ENCODE measurements at regions of chr19 and their contacts with region 1.

Region 1: GRCh38 chr19:56333505-56333904 is 18.9 kb upstream of the ZSCAN5A start:
- DNase-seq: peak; percentile 64
- H3K4me3 ChIP-seq: no peak overlapping the region; a peak in 1 of 4 replicates
- H3K27ac ChIP-seq: no peak overlapping the region
- H3K4me1 ChIP-seq: no peaks in the 10 kb centered on the region
- H3K27me3 ChIP-seq: no peaks in the 10 kb centered on the region
- CTCF ChIP-seq: peak; percentile 82
- EP300 ChIP-seq: no peak
- RAD21 ChIP-seq: peak; percentile 89

Region 2: DNA sequence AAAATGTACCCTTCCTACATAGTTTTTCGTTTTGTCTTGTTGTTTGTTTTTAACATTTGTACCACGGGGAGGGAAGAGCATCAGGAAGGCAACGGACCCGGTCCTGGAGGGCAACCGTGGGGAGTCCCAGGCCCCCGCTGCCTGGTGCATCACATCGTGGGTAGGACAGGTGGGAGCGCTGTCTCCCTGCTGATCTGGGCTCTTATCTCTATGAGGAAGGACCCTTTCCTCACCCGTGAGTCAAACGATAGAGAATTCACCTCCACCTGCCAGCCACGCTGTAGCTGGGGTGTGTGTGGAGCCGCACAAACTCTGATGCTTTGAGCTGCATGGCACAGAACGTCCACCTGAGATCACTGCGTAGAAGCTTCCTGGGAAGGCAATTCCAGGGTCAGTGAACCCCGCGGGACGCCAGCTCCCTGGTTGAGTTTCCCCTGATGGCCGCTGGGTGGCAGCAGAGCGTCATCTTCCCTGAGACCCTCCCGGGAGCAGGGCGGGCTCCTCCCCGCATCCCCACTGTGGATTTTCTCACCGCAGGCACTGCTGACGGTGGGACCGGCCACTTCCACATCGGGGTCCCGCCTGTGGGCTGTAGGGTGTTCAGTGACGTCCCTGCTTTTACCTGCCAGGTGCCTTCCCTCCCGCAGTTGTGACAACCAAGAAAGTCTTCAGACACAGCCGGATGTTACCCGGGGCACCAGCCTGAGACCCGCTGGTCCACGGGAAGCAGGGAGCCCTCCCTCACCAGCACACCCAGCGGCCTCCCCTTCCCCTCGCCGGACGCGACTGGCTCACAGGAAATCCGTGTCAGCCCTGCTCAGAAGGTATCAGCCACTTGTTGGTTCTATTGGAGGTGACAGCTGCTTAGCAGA is 267.1 kb before region 1 on chr19:
- CTCF ChIA-PET with region 1: interaction called, 31 read pairs
- POLR2A ChIA-PET with region 1: no interaction called
- DNase-seq: peak; percentile 89
- H3K4me3 ChIP-seq: peak overlapping the region; percentile 26 to 54
- H3K27ac ChIP-seq: no peak overlapping the region
- H3K4me1 ChIP-seq: peaks cover 0 to 7% of the 10 kb centered on the region in 2 experiments; a peak in 1 of 4 replicates
- H3K27me3 ChIP-seq: peaks cover 10% of the 10 kb centered on the region; the same call in 1 of the 2 replicates
- CTCF ChIP-seq: peak; percentile 87
- EP300 ChIP-seq: no peak
- RAD21 ChIP-seq: peak; percentile 75

Region 3: GRCh38 chr19:56252699-56253422 is 80.6 kb before region 1 on chr19:
- CTCF ChIA-PET with region 1: interaction called, 200 read pairs
- POLR2A ChIA-PET with region 1: interaction called, 10 read pairs
- DNase-seq: peak; percentile 74
- H3K4me3 ChIP-seq: peak overlapping the region in 1 of 2 experiments; percentile 28; a peak in 1 of 4 replicates
- H3K27ac ChIP-seq: no peak overlapping the region
- H3K4me1 ChIP-seq: peaks cover 0 to 4% of the 10 kb centered on the region in 2 experiments; a peak in 1 of 4 replicates
- H3K27me3 ChIP-seq: no peaks in the 10 kb centered on the region
- CTCF ChIP-seq: peak; percentile 83
- EP300 ChIP-seq: no peak
- RAD21 ChIP-seq: peak; percentile 56

Region 4: GRCh38 chr19:56314562-56315077 is 18.9 kb before region 1 on chr19 and contains the start of gene ZSCAN5A:
- CTCF ChIA-PET with region 1: interaction called, 17 read pairs
- POLR2A ChIA-PET with region 1: interaction called, 4 read pairs
- DNase-seq: peak; percentile 96
- H3K4me3 ChIP-seq: peak within 1 kb of the TSS; percentile 77 to 89
- H3K27ac ChIP-seq: peak within 1 kb of the TSS; percentile 95 to 99
- H3K4me1 ChIP-seq: peaks cover 0 to 13% of the 10 kb centered on the region in 2 experiments; a peak in 2 of 4 replicates
- H3K27me3 ChIP-seq: no peaks in the 10 kb centered on the region
- CTCF ChIP-seq: no peak
- EP300 ChIP-seq: no peak
- RAD21 ChIP-seq: no peak
- polyA plus RNA-seq, gene ZSCAN5A: 6.8 and 11.7 TPM in 2 replicates

Region 5: GRCh38 chr19:56350416-56351045 is 17.0 kb after region 1 on chr19:
- CTCF ChIA-PET with region 1: interaction called, 33 read pairs
- POLR2A ChIA-PET with region 1: interaction called, 5 read pairs
- DNase-seq: peak; percentile 55
- H3K4me3 ChIP-seq: no peak overlapping the region
- H3K27ac ChIP-seq: no peak overlapping the region
- H3K4me1 ChIP-seq: no peaks in the 10 kb centered on the region
- H3K27me3 ChIP-seq: no peaks in the 10 kb centered on the region
- CTCF ChIP-seq: peak; percentile 81
- EP300 ChIP-seq: no peak
- RAD21 ChIP-seq: peak; percentile 73